Mammary epithelial cell (primary cell): ENCODE measurements at regions of chr17 and their contacts with region 1.

Region 1: DNA sequence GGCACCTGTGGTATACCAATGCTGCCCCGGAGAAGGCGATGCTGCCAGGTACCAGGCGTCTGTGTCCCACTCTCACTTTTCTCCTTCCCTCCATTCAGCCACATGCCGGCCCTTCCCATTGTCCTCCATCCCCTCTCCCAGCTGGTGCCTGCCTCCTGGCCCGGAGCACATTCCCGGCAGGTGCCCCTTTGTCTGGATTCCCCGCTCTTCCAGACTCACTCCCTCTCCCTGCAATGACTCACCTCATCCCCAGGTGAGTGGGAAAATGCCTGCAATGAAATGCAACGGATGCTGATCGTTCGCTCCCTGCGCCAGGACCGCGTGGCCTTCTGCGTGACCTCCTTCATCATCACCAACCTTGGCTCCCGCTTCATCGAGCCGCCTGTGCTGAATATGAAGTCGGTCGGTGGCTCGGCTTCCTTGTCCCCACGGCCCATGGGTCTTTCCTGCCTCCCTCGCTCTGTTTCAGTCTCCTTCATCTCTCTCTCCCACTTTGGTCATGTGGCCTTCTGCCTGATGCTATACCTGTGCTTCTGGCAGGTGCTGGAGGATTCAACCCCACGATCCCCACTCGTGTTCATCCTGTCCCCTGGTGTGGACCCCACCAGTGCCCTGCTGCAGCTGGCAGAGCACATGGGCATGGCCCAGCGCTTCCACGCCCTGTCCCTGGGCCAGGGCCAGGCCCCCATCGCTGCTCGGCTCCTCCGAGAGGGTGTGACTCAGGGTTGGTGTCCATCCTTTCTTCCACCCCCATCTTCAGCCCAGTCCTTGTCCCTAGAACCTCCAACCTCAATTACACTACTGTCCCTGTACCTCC is 10.2 kb upstream of the KDM6B start:
- DNase-seq: no peak
- H3K4me3 ChIP-seq: no peak overlapping the region
- H3K27ac ChIP-seq: no peak overlapping the region
- H3K4me1 ChIP-seq: peaks cover 4% of the 10 kb centered on the region
- H3K27me3 ChIP-seq: no peaks in the 10 kb centered on the region
- CTCF ChIP-seq: no peak

Region 2: GRCh38 chr17:7740481-7741001 is 83.2 kb before region 1 on chr17:
- CTCF ChIA-PET with region 1: no interaction called
- dilution Hi-C with region 1: no loop called
- in situ Hi-C with region 1: no loop called
- intact Hi-C with region 1: loop called (anchors 1 kb)
- DNase-seq: no peak
- H3K4me3 ChIP-seq: no peak overlapping the region
- H3K27ac ChIP-seq: no peak overlapping the region
- H3K4me1 ChIP-seq: peaks cover under 1% of the 10 kb centered on the region
- H3K27me3 ChIP-seq: peaks cover 3% of the 10 kb centered on the region
- CTCF ChIP-seq: no peak

Region 3: DNA sequence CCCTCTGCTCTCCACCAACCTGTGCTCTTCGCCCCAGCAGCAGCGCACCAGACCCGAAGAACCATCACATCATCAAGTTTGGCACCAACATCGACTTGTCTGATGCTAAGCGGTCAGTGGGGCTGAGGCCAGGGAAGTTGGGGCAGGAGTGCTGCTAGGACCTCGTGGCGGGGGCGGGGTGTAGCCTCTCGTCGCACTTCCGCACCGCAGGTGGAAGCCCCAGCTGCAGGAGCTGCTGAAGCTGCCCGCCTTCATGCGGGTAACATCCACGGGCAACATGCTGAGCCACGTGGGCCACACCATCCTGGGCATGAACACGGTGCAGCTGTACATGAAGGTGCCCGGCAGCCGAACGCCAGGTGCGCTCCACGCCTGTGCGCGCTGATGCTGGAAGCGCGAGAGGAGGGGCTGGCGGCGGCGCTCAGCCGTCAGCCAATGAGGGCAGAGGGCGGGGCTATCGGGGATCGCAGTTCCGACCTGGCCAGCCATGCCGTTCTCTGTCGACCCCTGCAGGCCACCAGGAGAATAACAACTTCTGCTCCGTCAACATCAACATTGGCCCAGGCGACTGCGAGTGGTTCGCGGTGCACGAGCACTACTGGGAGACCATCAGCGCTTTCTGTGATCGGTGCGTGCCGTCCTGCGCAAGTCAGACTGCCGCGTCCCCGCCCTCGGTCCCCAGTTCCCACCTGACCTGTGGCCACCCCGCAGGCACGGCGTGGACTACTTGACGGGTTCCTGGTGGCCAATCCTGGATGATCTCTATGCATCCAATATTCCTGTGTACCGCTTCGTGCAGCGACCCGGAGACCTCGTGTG is 27.9 kb after region 1 on chr17:
- CTCF ChIA-PET with region 1: no interaction called
- dilution Hi-C with region 1: no loop called
- in situ Hi-C with region 1: no loop called
- intact Hi-C with region 1: loop called (anchors 1 kb)
- DNase-seq: peak; percentile 84
- H3K4me3 ChIP-seq: peak overlapping the region in 2 of 3 experiments; percentile 10 to 31
- H3K27ac ChIP-seq: no peak overlapping the region
- H3K4me1 ChIP-seq: peaks cover 46% of the 10 kb centered on the region
- H3K27me3 ChIP-seq: no peaks in the 10 kb centered on the region
- CTCF ChIP-seq: peak; percentile 79 to 93

Region 4: GRCh38 chr17:7903154-7904103 is 79.6 kb after region 1 on chr17:
- CTCF ChIA-PET with region 1: no interaction called
- dilution Hi-C with region 1: loop called (anchors 10 kb)
- in situ Hi-C with region 1: no loop called
- intact Hi-C with region 1: no loop called
- DNase-seq: peak; percentile 71
- H3K4me3 ChIP-seq: no peak overlapping the region
- H3K27ac ChIP-seq: no peak overlapping the region
- H3K4me1 ChIP-seq: no peaks in the 10 kb centered on the region
- H3K27me3 ChIP-seq: no peaks in the 10 kb centered on the region
- CTCF ChIP-seq: no peak

Region 5: GRCh38 chr17:7989781-7990655 is 166.2 kb after region 1 on chr17:
- CTCF ChIA-PET with region 1: no interaction called
- dilution Hi-C with region 1: no loop called
- in situ Hi-C with region 1: no loop called
- intact Hi-C with region 1: loop called (anchors 2 kb)
- DNase-seq: peak; percentile 65
- H3K4me3 ChIP-seq: peak overlapping the region; percentile 55 to 76 (median 55)
- H3K27ac ChIP-seq: peak overlapping the region; percentile 26
- H3K4me1 ChIP-seq: peaks cover 21% of the 10 kb centered on the region
- H3K27me3 ChIP-seq: no peaks in the 10 kb centered on the region
- CTCF ChIP-seq: peak; percentile 85 to 96